Left cardiac atrium (tissue), 4 donors: ENCODE measurements at regions of chr1 and their contacts with region 1.

Region 1: GRCh38 chr1:94463765-94464330 is 45.7 kb downstream of the ABCD3 start:
- DNase-seq: no peak
- ATAC-seq: peak in 1 of 2 donors; percentile 67

Region 2: GRCh38 chr1:94345148-94345721 is 118.6 kb before region 1 on chr1:
- intact Hi-C with region 1: loop called in 1 of 2 experiments (anchors 10 kb)
- DNase-seq: no peak
- ATAC-seq: no peak